ENCODE measurements at regions of chr9 and their contacts with region 1.

Region 1: GRCh38 chr9:19048966-19049916 is at the start of gene RRAGA:
- H3K4me3 Mint-ChIP-seq: peak within 1 kb of the TSS; percentile 93
- H3K27ac Mint-ChIP-seq: peak within 1 kb of the TSS; percentile 98
- H3K4me1 Mint-ChIP-seq: peaks cover 26% of the 10 kb centered on the region
- H3K27me3 Mint-ChIP-seq: no peaks in the 10 kb centered on the region

Region 2: DNA sequence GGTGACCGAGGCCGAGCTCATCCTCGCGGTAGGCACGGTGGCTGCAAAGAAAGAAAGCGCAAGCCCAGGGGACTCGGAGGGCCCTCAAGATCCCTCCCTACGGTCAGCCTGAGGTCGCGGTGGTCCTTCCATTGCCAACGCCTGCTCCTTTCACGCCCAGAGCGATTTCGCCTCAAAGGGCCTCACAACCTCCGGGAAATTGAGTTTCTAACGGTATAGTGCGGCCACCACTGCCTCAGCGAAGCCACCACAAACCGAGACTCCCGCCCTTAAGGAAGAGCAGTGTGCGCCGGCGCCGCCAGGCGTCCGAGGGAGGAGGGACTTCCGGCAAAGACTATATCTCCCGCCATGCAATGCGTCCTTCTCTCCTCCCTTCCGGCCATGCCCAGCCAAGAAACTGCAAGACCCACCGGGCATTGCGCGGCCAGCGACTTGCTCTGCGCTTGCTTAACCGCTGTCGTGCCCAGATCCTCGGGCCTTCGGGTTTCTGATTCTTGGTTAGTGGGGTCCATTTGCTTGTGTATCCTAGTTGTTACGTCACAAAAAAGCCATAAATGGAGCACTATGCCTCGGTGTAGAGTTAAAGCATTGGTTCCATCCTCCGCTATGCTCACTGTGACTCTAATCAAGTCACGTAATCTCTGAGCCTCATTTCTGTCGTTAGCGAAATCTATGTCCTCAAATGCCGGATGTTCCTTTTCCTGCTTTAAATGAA is 53.5 kb after region 1 on chr9 and contains the start of gene HAUS6:
- intact Hi-C with region 1: loop called (anchors 1 kb)
- H3K4me3 Mint-ChIP-seq: peak within 1 kb of the TSS; percentile 90
- H3K27ac Mint-ChIP-seq: peak within 1 kb of the TSS; percentile 86
- H3K4me1 Mint-ChIP-seq: peaks cover 25% of the 10 kb centered on the region
- H3K27me3 Mint-ChIP-seq: no peaks in the 10 kb centered on the region

Region 3: DNA sequence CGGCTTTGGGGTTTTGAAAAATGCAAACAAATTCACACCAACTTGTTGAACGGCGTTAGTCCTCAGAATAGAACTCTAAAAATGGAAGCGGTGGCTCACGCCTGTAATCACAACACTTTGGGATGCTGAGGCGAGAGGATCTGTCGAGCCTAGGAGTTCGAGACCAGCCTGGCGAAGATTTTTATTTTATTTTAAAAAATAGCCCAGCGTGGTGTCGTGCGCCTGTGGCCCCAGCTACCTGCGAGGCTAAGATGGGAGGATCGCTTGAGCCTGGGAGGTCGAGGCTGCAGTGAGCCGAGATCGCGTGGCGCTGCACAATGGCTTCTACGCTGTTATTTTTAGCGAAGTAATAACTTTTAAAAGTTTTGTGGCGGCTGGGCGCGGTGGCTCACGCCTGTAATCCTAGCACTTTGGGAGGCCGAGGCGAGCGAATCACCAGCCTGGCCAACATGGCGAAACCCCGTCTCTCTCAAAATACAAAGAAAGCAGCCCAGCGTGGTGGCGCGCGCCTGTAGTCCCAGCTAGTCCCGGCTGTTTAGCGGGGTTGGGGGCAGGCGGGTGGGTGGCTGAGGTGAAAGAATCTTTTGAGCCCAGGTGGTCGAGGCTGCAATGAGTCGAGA is 78.8 kb after region 1 on chr9:
- intact Hi-C with region 1: loop called (anchors 2 kb)
- H3K4me3 Mint-ChIP-seq: peak overlapping the region; percentile 84
- H3K27ac Mint-ChIP-seq: peak overlapping the region; percentile 96
- H3K4me1 Mint-ChIP-seq: peaks cover 52% of the 10 kb centered on the region
- H3K27me3 Mint-ChIP-seq: no peaks in the 10 kb centered on the region

Region 4: GRCh38 chr9:19174127-19174912 is 125.1 kb after region 1 on chr9:
- intact Hi-C with region 1: loop called (anchors 1 kb)
- H3K4me3 Mint-ChIP-seq: peak overlapping the region; percentile 9
- H3K27ac Mint-ChIP-seq: peak overlapping the region; percentile 70
- H3K4me1 Mint-ChIP-seq: peaks cover 25% of the 10 kb centered on the region
- H3K27me3 Mint-ChIP-seq: no peaks in the 10 kb centered on the region

Region 5: DNA sequence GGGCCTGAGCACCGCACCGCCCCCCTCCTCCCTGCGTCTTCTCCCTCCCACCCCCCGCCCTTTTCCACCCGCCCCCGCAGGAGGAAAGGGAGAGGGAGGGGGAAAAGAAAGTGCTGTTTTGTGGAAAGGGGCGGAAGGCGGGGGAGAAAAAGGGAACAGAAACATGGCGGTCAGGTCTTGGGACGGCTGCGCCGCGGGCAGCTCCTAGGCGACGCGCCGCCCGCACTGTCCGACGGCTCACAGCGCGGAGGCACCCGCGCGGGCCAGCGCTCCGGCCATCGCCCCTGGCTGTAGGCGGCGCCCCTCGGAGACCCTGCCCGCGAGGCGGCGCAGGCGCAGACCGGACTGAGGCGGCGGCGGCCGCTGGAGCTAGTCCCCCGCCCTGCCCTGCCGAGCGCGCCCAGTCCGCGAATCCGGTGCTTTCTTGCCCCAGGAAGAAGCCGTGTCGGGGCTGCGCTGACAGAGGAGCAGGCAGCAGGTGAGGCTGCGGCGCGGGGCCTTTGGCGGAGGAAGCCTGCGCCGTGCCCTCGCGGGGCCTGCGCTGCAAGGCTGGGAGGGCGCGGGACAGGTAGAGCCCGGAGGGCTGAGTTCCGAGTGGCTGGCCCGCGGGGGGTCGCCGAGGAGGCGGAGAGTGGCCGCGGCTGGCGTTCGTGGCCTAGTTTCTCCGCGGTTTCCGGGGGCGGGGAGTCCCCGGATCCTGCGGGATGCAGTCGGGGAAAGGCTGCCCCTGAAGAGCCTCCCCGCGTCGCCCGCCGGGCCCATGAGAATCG is 181.3 kb after region 1 on chr9 and contains the start of gene DENND4C:
- intact Hi-C with region 1: loop called (anchors 5 kb)
- H3K4me3 Mint-ChIP-seq: no peak within 1 kb of the TSS
- H3K27ac Mint-ChIP-seq: no peak within 1 kb of the TSS
- H3K4me1 Mint-ChIP-seq: peaks cover 27% of the 10 kb centered on the region
- H3K27me3 Mint-ChIP-seq: no peaks in the 10 kb centered on the region

Region 6: DNA sequence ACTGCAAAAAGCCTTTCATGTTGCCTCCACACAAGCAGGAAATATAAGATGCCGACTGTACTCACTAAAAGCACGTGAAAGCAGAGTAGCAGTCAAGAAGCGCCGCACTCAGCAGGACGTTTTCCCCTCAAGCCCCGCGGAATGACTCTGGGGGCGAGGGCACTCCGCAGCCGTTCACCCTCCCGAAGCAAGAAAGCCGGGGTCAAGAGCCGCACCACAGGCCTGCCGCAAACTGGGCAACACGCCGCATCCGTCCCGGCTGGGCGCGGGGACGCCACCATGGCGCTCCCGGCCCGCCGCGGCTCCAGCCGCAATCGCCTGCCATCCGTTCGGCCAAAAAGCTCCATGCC is 330.4 kb after region 1 on chr9:
- intact Hi-C with region 1: loop called (anchors 1 kb)
- H3K4me3 Mint-ChIP-seq: peak overlapping the region; percentile 96
- H3K27ac Mint-ChIP-seq: peak overlapping the region; percentile 97
- H3K4me1 Mint-ChIP-seq: peaks cover 36% of the 10 kb centered on the region
- H3K27me3 Mint-ChIP-seq: no peaks in the 10 kb centered on the region

Region 7: GRCh38 chr9:19456996-19457692 is 407.9 kb after region 1 on chr9:
- intact Hi-C with region 1: loop called (anchors 2 kb)
- H3K4me3 Mint-ChIP-seq: peak overlapping the region; percentile 28
- H3K27ac Mint-ChIP-seq: no peak overlapping the region
- H3K4me1 Mint-ChIP-seq: peaks cover 10% of the 10 kb centered on the region
- H3K27me3 Mint-ChIP-seq: no peaks in the 10 kb centered on the region